GM10248 (cell line): ENCODE measurements at regions of chr6 and their contacts with region 1.

Region 1: GRCh38 chr6:82348130-82348529 is 15.5 kb upstream of the TPBG start:
- DNase-seq: no peak
- CTCF ChIP-seq: no peak

Region 2: GRCh38 chr6:82322386-82322785 is 25.7 kb before region 1 on chr6:
- CTCF ChIA-PET with region 1: no interaction called
- POLR2A ChIA-PET with region 1: no interaction called
- DNase-seq: no peak
- CTCF ChIP-seq: no peak

Region 3: DNA sequence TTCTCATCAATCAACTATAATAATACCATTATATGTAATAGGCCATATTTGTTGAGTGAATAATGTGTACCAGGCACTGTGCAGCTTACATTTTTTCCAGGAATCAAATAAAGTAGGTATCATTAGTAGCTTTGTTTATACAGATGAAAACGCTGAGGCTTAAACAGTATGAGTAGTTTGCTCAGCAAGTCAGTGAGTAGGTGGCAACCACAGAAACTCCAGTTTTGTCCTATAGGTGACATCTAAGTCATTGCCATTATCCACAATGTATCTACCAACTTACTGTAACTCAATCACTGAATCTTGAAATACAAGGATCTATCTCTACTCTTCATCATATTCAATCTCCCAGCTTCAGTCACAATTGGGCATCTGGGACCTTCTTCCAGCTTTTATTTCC is 14.3 kb before region 1 on chr6:
- CTCF ChIA-PET with region 1: interaction called, 13 read pairs
- POLR2A ChIA-PET with region 1: no interaction called
- DNase-seq: no peak
- CTCF ChIP-seq: no peak